PC-9 (cell line): ENCODE measurements at regions of chr1 and their contacts with region 1.

Region 1: DNA sequence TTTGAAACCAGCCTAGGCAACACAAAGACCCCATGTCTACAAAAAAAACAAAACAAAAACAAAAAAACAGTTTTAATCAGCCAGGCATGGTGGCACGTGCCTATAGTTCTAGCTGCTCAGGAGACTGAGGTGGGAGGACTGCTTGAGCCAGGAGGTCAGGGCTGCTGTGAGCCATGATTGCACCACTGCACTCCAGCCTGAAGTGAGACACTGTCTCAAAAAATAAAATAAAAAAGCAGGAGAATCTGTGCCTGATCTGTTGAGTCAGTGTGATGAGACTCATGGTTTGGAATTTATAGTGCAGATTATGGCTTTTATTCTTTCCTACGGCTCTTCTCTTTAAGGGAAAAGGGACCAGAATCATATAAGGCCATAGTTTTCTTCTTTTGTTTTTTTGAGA is 16.5 kb downstream of the TRIT1 start:
- DNase-seq: no peak
- H3K4me3 ChIP-seq: no peak overlapping the region
- H3K27ac ChIP-seq: no peak overlapping the region
- H3K4me1 ChIP-seq: no peaks in the 10 kb centered on the region
- H3K27me3 ChIP-seq: no peaks in the 10 kb centered on the region
- CTCF ChIP-seq: no peak

Region 2: GRCh38 chr1:39808784-39809517 is 57.8 kb before region 1 on chr1:
- CTCF ChIA-PET with region 1: no interaction called
- POLR2A ChIA-PET with region 1: no interaction called
- intact Hi-C with region 1: no loop called
- DNase-seq: peak in 1 of 2 experiments; percentile 23
- H3K4me3 ChIP-seq: no peak overlapping the region
- H3K27ac ChIP-seq: no peak overlapping the region
- H3K4me1 ChIP-seq: no peaks in the 10 kb centered on the region
- H3K27me3 ChIP-seq: no peaks in the 10 kb centered on the region
- CTCF ChIP-seq: no peak

Region 3: GRCh38 chr1:39933956-39934941 is 67.5 kb after region 1 on chr1:
- CTCF ChIA-PET with region 1: no interaction called
- POLR2A ChIA-PET with region 1: interaction called, 10 read pairs
- intact Hi-C with region 1: no loop called
- DNase-seq: peak; percentile 17 to 78
- H3K4me3 ChIP-seq: no peak overlapping the region
- H3K27ac ChIP-seq: peak overlapping the region; percentile 44
- H3K4me1 ChIP-seq: peaks cover 21% of the 10 kb centered on the region
- H3K27me3 ChIP-seq: no peaks in the 10 kb centered on the region
- CTCF ChIP-seq: no peak